ENCODE measurements at regions of chr13 and their contacts with region 1.

Region 1: DNA sequence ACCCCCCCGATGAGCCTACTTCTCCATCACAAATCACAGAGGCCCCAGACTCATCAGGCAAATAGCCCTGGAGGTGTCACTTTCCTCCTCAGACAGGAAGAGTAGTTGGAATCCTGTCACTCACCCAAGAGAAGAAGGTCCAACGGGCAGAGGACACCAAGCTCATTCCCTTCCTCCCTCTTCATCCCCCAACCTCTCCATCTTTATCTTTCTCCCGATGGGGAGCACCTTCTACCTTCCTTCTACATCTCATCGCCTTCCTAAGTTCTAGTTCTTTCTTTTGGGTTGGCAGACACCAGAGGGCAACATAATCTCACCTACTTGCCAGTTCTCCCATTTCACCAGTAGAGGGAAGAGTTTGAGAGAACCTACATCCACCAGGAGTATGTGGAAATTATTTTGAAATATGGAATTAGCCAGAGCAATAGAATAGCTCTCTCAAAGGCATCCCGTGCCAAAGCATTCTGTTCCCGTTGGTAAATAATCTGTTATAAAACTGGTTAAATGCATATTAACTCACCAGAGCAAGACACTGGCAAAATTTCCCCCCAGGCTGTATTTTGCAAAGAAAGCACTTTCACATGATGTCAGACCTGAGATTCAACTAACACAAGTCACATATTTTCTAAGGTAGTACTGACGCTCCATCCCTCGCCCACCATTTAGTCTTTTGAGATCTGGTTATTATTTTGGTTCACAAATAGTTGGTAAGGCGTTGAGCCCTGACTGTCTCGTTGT is 55.0 kb downstream of the ZIC5 start:
- DNase-seq: peak in 12 of 42 donors; percentile 26 to 61 (median 40)

Region 2: GRCh38 chr13:99980201-99980823 is 63.8 kb after region 1 on chr13:
- intact Hi-C with region 1: no loop called
- DNase-seq: peak in 21 of 42 donors; percentile 22 to 72 (median 54)

Region 3: GRCh38 chr13:100035919-100036318 is 119.4 kb after region 1 on chr13:
- intact Hi-C with region 1: no loop called
- DNase-seq: no peak

Region 4: DNA sequence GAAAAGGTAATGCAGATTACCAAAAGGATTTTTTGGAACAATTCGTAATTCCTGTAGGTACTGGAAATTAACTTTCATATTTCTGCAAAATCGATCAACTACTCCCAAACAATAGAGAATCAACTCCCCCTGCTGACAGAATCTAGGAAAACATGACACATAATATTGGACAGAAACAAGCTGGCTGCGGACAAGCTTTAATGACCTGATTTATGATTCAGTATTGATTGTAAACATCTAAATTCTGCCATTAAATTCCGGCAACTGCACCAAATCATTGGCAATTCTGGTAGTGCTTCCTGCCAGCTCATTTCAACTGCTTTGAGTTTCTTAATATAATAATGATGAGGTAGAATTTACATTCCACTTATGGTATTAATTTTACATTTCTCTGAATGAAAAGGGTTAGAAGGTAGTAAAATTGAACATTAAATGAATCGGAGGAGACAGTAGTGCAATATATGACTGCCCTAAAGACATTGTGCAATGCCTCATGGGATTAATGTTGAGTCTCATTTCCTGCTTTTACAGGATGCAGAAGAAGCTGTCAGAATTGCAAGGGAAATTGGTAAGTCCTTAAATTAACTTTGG is 318.9 kb after region 1 on chr13:
- intact Hi-C with region 1: loop called (anchors 10 kb)
- DNase-seq: peak in 8 of 42 donors; percentile 15 to 59 (median 30)